GM10248 (cell line): ENCODE measurements at regions of chr5 and their contacts with region 1.

Region 1: DNA sequence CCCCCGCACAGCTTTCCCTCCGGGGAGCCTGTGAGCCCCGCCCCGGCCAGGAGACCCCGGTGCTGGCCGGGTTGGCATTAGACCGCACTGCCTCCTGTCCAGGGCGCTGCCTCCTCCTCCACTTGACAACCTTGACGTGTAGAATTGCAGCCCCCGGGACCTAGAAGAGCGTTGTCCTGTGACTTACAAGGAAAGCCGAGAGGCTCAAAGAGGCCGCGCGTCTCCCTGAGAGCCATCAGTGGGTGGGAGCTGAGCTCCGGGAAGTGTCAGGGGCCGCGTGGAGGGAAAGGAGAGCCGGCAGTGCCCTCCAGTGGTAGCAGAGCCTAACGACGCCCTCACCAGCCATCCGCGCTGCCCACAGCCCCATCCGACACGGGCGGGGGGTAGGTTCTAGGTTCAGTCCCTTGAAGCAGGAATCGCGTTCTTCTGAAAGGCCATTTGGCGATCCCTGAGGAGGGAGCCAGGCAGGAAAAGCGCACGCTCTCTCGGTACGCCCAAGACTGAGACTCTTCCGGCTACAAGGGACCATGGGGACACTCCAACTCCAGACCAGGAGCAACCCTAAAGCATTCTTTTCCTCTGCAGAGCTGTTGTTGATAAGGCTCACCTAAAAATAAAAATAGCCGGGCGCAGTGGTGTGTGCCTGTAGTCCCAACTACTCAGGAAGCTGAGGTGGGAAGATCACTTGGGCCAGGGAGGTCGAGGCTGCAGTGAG is 40.6 kb upstream of the SAP30L start:
- DNase-seq: peak; percentile 91
- CTCF ChIP-seq: peak; percentile 87

Region 2: DNA sequence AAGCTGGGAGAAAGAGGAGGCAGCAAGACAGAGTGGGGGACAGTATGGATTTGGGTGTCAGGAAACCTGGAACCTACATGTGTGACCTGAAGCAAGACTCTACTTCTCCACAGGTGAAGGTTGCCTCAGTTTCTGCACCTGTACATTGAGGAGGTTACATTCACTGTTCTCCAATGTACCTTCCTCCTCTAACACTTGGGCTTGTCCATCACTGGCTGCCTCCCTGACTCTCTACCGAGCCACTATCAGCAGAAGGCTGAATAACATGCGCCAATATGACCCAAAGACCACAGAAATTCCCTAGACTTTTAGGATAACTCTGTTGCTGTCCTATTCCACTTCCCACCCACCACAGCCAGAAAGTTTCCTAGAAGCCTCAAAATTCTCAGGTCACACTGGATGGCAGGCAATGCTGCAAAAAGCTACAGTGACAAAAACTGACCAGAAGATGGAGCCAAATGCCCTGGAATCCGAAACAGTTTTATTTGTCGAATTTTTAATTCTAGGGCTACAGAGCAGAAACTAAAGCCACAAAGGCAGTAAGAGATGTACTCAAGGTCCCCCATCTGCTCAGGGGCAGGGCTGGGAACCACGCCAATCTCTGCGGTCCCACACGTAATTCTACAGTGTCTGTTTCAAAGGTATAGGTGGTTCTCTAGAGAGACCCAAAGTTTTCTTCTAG is 431.0 kb before region 1 on chr5:
- CTCF ChIA-PET with region 1: interaction called, 34 read pairs
- POLR2A ChIA-PET with region 1: no interaction called
- DNase-seq: peak; percentile 66
- CTCF ChIP-seq: peak; percentile 79

Region 3: GRCh38 chr5:154072414-154073171 is 332.6 kb before region 1 on chr5:
- CTCF ChIA-PET with region 1: interaction called, 80 read pairs
- POLR2A ChIA-PET with region 1: interaction called, 6 read pairs
- DNase-seq: peak; percentile 86
- CTCF ChIP-seq: peak; percentile 88

Region 4: DNA sequence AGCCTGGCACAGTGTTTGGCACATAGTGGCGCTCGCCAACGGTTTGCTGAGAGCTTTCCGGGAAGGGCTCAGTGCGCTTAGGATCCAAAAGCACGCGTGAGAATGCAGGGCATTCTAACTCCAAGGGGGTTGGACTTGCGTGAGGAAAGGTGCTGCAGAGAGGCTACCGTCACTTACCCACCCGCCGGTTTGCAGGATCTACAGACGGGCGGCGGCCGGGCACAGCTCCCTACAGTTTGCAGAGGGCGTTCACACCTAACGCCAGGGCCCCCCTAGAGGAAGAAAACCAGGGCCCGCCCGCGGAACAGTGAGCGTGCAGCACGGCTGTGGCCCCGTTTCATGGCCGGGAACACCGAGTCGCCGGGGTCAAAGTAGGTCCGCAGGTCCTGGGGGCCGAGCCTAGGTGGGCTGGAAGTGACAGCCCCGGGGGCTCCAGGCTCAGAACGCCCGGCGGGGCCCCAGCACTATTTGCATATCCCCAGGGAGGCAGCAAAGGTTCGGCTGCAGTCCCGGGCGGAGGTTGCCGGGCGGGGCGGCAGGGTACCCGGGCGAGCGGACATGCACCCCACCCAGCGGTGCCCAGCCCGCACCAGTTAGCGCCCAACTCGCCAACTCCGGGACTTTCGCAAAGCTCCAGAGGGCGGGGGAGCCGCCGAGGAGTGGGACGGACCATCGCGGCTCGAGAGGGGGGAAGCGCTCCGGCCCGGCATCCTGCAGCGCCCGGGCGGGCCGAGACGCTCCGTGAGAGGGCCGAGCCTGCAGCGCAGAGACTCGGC is 215.2 kb before region 1 on chr5:
- CTCF ChIA-PET with region 1: interaction called, 55 read pairs
- POLR2A ChIA-PET with region 1: no interaction called
- DNase-seq: peak; percentile 90
- CTCF ChIP-seq: peak; percentile 26

Region 5: GRCh38 chr5:154273028-154273617 is 132.1 kb before region 1 on chr5:
- CTCF ChIA-PET with region 1: interaction called, 16 read pairs
- POLR2A ChIA-PET with region 1: no interaction called
- DNase-seq: peak; percentile 31
- CTCF ChIP-seq: no peak

Region 6: GRCh38 chr5:154334406-154335064 is 70.7 kb before region 1 on chr5:
- CTCF ChIA-PET with region 1: interaction called, 18 read pairs
- POLR2A ChIA-PET with region 1: no interaction called
- DNase-seq: no peak
- CTCF ChIP-seq: no peak

Region 7: DNA sequence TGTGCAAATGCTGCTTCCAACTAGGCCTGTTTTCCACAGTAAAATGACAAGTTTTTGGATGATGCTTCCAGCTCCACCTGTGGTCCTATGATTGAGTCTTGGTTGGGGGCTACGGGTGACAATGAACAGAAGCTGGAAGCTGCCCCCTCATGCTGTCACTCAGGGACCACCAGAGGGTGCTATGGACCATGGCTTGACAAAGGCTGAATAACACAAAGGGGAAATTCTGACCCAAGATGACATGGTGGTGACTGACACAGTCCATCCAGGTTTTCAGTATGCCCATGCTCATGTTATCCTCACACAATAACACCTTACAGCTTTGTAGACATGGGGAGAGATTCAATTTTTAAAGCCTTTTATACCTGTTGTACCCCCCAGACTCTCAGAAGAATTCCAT is 16.6 kb after region 1 on chr5:
- CTCF ChIA-PET with region 1: interaction called, 61 read pairs
- POLR2A ChIA-PET with region 1: interaction called, 4 read pairs
- DNase-seq: no peak
- CTCF ChIP-seq: peak; percentile 43

Region 8: GRCh38 chr5:154541553-154541952 is 136.3 kb after region 1 on chr5:
- CTCF ChIA-PET with region 1: no interaction called
- POLR2A ChIA-PET with region 1: no interaction called
- DNase-seq: no peak
- CTCF ChIP-seq: no peak